MCF 10A (cell line): ENCODE measurements at regions of chr15 and their contacts with region 1.

Region 1: DNA sequence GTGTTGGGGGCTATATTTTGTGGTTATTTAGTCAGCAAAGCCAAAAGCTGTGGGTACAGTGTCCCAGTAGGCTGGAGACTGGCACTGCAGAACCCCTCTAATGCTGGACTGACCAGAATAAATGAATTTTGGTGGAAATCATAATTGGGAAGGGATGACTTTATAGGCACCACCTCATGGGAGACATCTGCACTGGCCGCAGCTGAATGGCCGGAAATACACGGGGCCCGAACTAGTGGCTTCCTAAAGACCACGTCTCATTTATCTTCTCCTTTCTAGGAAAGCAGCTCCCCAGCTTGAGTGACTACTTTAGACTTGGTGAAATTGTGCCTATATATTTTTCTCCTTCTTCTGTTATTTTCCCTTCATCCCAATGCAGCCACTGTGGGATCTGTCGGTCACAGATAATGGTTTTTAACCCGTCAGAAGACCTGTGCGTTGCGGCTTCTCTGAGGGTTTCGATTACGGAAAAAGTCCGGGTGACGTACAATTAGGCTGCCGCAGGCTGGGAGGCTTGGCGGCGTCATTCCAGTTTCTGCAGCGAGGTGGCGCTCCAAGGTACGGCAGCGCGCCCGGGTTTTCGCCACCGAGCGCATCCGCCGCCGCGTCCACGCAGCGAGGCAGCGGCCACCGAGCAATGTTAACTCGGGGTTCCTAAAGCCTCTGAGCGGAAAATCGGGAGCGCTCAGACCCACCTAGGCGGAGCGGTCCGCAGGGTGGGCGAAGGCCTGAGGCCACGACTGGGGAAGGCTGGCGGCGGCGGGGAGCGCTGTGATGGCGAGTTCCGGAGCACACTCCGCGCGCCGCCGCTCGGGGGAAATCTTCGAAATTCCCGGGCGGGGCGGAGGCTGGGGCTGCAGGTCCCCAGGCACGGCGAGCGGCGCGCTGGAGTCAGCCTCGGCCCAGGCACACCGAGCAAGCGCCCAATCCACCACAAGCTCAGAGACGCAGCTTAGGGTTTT is 26.3 kb downstream of the NR2F2 start:
- DNase-seq: peak; percentile 75
- H3K4me3 Mint-ChIP-seq: peak overlapping the region; percentile 73
- H3K27ac Mint-ChIP-seq: no peak overlapping the region
- H3K4me1 Mint-ChIP-seq: peaks cover 5% of the 10 kb centered on the region
- H3K27me3 Mint-ChIP-seq: no peaks in the 10 kb centered on the region
- CTCF ChIP-seq: peak; percentile 95

Region 2: DNA sequence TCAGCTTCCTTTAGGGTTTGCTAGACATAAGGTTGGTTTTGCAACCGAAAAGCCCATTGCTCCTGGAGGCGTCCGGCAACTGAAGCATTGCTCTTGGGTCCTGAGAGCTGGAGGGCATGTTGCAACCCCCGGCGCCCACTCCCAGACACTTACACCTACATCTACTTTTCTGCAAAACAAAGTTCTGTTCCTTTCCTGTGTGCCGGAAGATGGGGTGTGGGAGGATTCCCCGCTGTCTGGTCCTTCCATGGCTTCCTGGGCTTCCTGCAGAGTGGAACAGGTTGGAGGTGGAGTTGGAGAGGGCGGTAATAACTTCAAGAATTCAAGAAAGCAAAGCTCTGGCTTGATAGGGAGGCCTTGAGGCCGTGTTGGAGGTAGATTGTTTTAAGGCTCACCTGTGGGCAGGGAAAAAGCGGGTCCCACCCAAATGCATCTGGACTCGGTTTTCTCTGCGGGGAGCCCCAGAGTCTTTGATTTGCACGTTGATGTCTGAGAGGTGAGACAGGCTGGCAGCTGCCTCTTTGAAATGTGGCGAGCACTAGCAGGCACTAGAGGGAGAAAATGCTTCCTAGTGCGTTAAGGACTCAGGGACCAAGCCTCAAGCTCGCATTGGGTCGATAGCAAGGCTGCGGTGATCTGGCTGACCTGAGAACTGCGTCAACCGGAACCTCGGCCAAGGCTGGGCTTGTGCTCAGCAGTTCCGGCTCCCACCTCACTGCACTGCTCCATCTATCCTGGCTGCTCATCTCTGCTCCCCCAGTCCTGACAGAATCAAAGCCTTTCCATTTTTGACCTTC is 13.2 kb after region 1 on chr15:
- CTCF ChIA-PET with region 1: interaction called, 14 read pairs
- POLR2A ChIA-PET with region 1: no interaction called
- intact Hi-C with region 1: no loop called
- DNase-seq: no peak
- H3K4me3 Mint-ChIP-seq: no peak overlapping the region
- H3K27ac Mint-ChIP-seq: no peak overlapping the region
- H3K4me1 Mint-ChIP-seq: no peaks in the 10 kb centered on the region
- H3K27me3 Mint-ChIP-seq: peaks cover 7% of the 10 kb centered on the region
- CTCF ChIP-seq: no peak

Region 3: DNA sequence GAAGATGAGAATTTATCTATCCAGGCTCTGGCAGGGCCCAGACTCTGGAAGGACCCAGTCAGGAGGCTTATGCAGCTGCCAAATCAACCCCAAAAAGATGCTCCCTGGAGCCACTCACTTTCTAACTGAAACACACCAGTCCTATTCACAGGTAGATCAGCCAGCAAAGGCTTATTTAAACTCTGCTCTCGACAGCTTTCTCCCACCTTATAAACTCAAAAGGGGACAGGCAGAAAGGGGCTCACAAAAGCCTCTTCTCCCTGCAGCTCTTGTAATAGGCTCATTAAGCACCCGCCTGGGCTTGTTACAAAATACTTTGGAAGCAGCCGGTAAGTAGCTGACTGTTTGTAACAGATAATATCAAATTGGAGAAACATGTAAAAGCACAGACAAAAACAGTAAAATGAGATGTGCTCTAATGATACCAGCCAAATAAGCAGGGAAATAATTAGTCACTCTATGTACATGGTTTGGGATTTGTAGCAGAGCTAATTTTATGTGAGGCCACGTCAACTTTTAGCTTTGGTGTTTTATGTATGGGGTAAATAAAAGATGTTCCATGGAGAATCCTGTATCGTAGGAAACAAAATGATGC is 187.5 kb after region 1 on chr15:
- CTCF ChIA-PET with region 1: no interaction called
- POLR2A ChIA-PET with region 1: no interaction called
- intact Hi-C with region 1: no loop called
- DNase-seq: no peak
- H3K4me3 Mint-ChIP-seq: no peak overlapping the region
- H3K27ac Mint-ChIP-seq: no peak overlapping the region
- H3K4me1 Mint-ChIP-seq: no peaks in the 10 kb centered on the region
- H3K27me3 Mint-ChIP-seq: peaks cover 14% of the 10 kb centered on the region
- CTCF ChIP-seq: no peak

Region 4: DNA sequence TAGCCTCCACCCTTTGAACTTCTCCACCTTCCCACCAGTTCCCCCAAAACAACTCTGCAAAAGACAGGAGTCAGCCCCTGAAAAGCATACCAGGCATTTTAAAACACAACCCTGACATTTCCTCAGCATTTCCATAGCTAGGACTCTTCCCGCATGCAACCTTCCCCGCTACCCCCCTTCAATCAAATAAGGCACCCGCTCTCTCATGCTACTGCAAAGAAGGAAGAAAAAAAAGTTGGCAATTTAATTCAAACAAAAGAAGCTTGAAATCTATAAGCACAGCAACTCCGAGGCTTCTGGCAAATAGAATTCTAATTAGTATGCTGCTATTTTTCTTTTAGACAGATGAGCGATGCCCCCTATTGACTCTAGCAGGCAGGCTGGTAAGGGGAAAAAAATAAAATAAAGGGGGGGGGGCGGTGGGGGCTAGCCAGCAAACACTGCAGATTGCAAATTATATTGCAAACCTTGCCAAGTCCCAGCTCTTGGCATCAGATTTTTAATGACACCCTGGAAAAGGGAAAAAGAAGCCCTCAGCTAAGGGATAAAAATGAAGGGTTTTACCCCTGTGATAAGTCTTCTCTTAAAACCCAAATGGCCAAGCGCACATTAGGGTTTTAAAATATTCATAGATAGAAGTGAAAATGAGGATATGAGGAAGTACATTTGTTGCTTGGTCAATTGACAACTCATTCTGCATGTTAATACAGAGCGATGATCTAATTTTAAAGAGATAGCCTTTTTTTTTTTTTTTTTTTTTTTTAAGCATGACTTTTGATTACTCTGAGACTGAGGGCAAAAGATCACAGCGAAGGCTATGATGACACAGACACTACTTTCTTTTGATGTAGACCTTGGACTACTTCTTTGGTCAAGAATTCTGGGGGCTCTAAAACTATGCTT is 229.0 kb after region 1 on chr15:
- CTCF ChIA-PET with region 1: interaction called, 6 read pairs
- POLR2A ChIA-PET with region 1: no interaction called
- intact Hi-C with region 1: loop called (anchors 1 kb)
- DNase-seq: peak; percentile 8
- H3K4me3 Mint-ChIP-seq: no peak overlapping the region
- H3K27ac Mint-ChIP-seq: no peak overlapping the region
- H3K4me1 Mint-ChIP-seq: no peaks in the 10 kb centered on the region
- H3K27me3 Mint-ChIP-seq: peaks cover 87% of the 10 kb centered on the region
- CTCF ChIP-seq: no peak

Region 5: GRCh38 chr15:96893159-96893906 is 536.6 kb after region 1 on chr15:
- CTCF ChIA-PET with region 1: interaction called, 4 read pairs
- POLR2A ChIA-PET with region 1: interaction called, 3 read pairs
- intact Hi-C with region 1: loop called (anchors 1 kb)
- DNase-seq: peak; percentile 49
- H3K4me3 Mint-ChIP-seq: no peak overlapping the region
- H3K27ac Mint-ChIP-seq: no peak overlapping the region
- H3K4me1 Mint-ChIP-seq: peaks cover 9% of the 10 kb centered on the region
- H3K27me3 Mint-ChIP-seq: no peaks in the 10 kb centered on the region
- CTCF ChIP-seq: peak; percentile 62